Naive thymus-derived CD8-positive, alpha-beta T cell (primary cell): ENCODE measurements at regions of chr14 and their contacts with region 1.

Region 1: DNA sequence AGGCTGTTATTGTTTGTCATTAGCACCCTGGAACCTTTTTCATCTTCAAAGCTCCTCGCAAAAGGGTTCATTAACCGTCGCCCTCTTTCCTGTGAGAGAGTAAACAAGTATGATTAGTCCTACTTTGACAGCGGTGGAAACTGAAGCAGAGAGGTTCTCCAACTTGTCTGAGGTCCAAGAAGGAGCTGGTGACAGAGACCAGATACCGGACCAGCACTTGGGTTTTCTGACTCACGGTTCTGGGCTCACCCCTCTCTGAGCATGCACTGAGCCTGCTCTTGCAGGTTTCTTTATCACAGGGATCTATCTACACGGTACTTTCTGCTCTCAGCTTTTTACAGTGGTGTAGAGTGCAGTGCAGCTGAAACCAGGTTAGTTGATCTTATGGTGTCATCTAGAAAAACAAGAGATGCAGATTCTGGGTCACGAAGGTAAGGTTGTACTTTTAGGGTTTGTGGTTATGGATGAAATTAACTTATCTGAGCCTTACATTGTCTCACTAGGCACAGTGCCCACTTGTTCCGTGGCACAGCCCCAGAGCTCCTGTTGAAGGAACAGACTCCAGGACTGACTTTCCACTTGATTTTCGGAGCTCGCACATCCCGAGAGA is 62.1 kb downstream of the PPP2R5C start:
- DNase-seq: peak; percentile 30 to 86 (median 66)
- ATAC-seq: peak; percentile 66 to 69
- H3K4me3 Mint-ChIP-seq: peak overlapping the region; percentile 84 to 97 (median 92)
- H3K27ac Mint-ChIP-seq: peak overlapping the region; percentile 96 to 100 (median 100)
- H3K4me1 Mint-ChIP-seq: peaks cover 44 to 90% (median 88%) of the 10 kb centered on the region in 4 donors
- H3K27me3 Mint-ChIP-seq: no peaks in the 10 kb centered on the region

Region 2: DNA sequence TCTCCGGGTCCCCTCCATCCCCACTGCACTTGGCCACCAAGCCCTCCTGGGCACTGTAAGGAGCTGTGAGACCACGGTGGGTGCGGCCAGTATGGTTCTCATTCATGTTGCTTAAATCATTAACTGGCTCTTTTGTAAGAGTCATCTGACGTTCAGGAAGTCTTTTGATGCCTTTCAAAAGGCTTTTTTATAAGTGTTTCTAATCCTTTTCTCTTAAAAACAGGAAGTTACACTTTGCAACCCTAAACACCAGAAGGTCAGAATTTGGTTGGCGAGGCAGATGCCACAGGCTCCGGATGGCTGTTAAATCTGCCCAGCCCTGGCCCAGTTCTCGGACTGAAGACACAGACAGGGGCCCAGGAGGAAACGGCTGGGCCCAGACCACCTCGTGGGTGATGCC is 288.4 kb before region 1 on chr14:
- POLR2A ChIA-PET with region 1: no interaction called
- DNase-seq: peak in 3 of 10 donors; percentile 3 to 17 (median 6)
- ATAC-seq: peak in 1 of 2 donors; percentile 65
- H3K4me3 Mint-ChIP-seq: peak overlapping the region in 6 of 10 donors; percentile 22 to 74 (median 52)
- H3K27ac Mint-ChIP-seq: peak overlapping the region in 9 of 10 donors; percentile 27 to 95 (median 66)
- H3K4me1 Mint-ChIP-seq: peaks cover 16 to 33% (median 26%) of the 10 kb centered on the region in 4 donors
- H3K27me3 Mint-ChIP-seq: peaks cover 5 to 26% (median 12%) of the 10 kb centered on the region in 5 donors

Region 3: GRCh38 chr14:101635749-101636560 is 187.7 kb before region 1 on chr14:
- POLR2A ChIA-PET with region 1: no interaction called
- DNase-seq: no peak
- ATAC-seq: no peak
- H3K4me3 Mint-ChIP-seq: no peak overlapping the region
- H3K27ac Mint-ChIP-seq: peak overlapping the region in 1 of 10 donors; percentile 35
- H3K4me1 Mint-ChIP-seq: peaks cover 0 to 9% (median 3%) of the 10 kb centered on the region in 4 donors
- H3K27me3 Mint-ChIP-seq: peaks cover 10 to 53% (median 22%) of the 10 kb centered on the region in 5 donors

Region 4: DNA sequence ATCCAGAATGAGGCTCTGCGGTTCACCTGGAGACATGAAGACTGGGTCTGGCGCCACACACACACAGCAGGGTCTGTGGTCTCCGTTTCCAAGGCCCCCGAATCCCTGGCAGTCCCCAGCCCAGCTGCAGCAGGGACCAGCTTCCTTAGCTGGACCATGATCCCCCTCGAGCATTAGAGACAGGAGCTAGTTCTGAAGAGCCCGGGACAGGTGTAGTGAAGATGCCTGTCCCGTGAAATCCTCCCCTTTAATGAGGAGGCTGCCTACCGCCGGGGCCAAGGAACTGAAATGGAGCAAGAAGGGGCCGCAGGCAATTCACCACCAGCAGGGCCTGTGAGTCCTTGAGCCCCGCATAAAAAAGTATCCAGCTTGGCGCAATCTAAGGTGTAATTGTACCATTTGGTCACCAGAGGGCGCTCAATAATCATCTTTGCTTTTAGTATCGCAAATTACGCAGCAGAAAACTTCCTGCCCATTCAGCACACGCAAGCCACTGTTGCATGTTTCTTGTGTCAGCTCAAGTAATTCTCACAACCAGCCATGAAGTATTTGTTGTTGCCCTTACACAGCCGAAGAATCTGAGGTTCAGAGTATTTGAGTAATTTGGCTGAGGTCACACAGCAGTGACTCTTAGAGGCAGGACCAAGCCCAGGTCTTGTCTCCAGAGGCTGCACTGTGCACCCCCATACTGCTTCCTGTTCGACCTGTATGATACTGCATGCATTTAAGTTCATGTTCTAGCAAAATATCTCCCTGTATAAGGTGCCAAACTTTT is 116.4 kb before region 1 on chr14:
- POLR2A ChIA-PET with region 1: interaction called, 13 read pairs
- DNase-seq: peak in 9 of 10 donors; percentile 51 to 87 (median 74)
- ATAC-seq: peak; percentile 44 to 59
- H3K4me3 Mint-ChIP-seq: peak overlapping the region; percentile 40 to 79 (median 64)
- H3K27ac Mint-ChIP-seq: peak overlapping the region; percentile 76 to 95 (median 89)
- H3K4me1 Mint-ChIP-seq: peaks cover 8 to 44% (median 34%) of the 10 kb centered on the region in 4 donors
- H3K27me3 Mint-ChIP-seq: peaks cover 0 to 4% (median 0%) of the 10 kb centered on the region in 5 donors

Region 5: DNA sequence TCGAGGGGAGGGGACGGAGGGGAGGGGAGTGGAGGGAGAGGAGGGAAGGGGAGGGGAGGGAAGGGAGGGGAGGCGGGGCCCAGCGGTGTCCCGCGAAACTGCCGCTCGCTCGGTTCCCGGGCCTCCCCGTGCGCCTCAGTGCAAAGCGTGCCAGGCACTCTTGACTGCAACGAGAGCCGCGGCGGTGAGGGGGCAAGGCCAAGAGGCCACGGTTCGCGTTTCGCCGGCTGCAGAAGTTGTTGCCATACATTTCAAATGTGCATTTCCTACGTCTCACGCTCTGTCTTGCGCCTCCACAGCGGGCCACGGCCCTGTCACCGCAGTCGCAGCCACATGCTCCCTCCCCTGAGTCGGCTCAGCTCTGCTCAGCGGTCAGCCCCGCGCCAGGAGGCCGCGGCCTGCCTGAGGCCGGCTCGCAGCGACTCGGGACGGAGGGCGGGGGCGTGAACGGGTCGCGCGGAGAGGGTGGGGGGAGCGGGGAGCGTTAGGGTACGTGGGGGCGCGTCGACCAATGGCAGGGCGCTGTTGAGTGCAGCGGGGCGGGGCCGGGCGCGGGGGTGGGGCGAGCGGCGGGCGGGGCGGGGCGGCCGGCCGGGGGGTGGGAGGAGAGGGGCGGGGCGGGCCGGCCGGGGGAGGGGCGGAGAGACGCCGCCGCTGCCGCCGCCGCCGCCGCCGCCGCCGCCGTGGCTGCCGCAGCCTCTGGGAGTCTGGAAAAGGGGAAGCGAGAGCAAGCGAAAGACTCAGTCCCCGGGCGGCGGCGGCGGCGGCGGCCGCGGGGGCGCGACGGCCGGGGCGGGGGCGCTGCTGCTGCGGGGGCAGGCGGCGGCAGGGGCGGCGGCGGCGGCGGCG is 62.4 kb before region 1 on chr14 and contains the start of gene PPP2R5C:
- POLR2A ChIA-PET with region 1: interaction called, 20 read pairs
- DNase-seq: peak; percentile 80 to 94 (median 89)
- ATAC-seq: peak; percentile 71 to 73
- H3K4me3 Mint-ChIP-seq: peak within 1 kb of the TSS; percentile 87 to 98 (median 93)
- H3K27ac Mint-ChIP-seq: peak within 1 kb of the TSS; percentile 43 to 96 (median 92)
- H3K4me1 Mint-ChIP-seq: peaks cover 14 to 36% (median 26%) of the 10 kb centered on the region in 4 donors
- H3K27me3 Mint-ChIP-seq: no peaks in the 10 kb centered on the region
- polyA plus RNA-seq, gene PPP2R5C: 143 to 237 (median 172) TPM

Region 6: DNA sequence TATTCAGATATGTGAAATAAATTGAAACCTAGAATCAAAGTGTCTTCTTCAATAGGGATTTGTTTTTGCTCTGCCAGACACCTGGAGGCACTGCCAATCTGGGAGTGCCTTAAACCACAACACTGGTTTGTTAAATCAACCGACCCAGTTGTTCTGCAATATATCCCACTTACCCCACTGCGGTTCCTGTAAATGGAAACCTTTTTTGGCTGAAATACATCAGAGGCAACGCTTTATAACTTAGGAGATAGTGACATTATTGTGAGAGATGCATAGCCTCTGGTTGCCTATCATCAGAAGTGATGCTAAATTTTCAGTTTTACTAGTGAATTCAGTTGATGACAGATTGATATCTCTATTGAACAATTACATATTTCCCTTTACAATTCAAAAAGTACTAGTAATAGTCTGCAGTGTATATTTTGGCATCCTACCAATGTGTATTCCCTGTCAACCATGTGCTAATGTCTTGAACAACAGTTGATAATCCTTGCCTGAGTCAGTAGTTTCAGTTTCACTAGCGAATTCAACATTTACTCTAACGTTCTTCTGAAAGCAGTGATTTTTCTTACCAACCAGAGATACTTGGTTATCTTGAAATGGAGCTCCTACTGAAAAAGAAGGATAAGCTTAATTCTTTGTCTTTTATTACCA is 31.6 kb before region 1 on chr14:
- POLR2A ChIA-PET with region 1: interaction called, 14 read pairs
- DNase-seq: peak in 3 of 10 donors; percentile 40 to 50 (median 41)
- ATAC-seq: peak; percentile 77 to 83
- H3K4me3 Mint-ChIP-seq: peak overlapping the region; percentile 42 to 89 (median 78)
- H3K27ac Mint-ChIP-seq: peak overlapping the region; percentile 70 to 97 (median 88)
- H3K4me1 Mint-ChIP-seq: peaks cover 15 to 30% (median 24%) of the 10 kb centered on the region in 4 donors
- H3K27me3 Mint-ChIP-seq: no peaks in the 10 kb centered on the region

Region 7: GRCh38 chr14:101834800-101835547 is 11.4 kb after region 1 on chr14:
- POLR2A ChIA-PET with region 1: interaction called, 34 read pairs
- DNase-seq: no peak
- ATAC-seq: no peak
- H3K4me3 Mint-ChIP-seq: peak overlapping the region in 7 of 10 donors; percentile 15 to 34 (median 23)
- H3K27ac Mint-ChIP-seq: peak overlapping the region; percentile 73 to 97 (median 84)
- H3K4me1 Mint-ChIP-seq: peaks cover 37 to 92% (median 90%) of the 10 kb centered on the region in 4 donors
- H3K27me3 Mint-ChIP-seq: no peaks in the 10 kb centered on the region

Region 8: GRCh38 chr14:101927859-101928258 is 104.2 kb after region 1 on chr14:
- POLR2A ChIA-PET with region 1: no interaction called
- DNase-seq: no peak
- ATAC-seq: no peak
- H3K4me3 Mint-ChIP-seq: no peak overlapping the region
- H3K27ac Mint-ChIP-seq: peak overlapping the region in 3 of 10 donors; percentile 6 to 69 (median 36)
- H3K4me1 Mint-ChIP-seq: no peaks in the 10 kb centered on the region
- H3K27me3 Mint-ChIP-seq: no peaks in the 10 kb centered on the region

Region 9: GRCh38 chr14:101947906-101948665 is 124.5 kb after region 1 on chr14:
- POLR2A ChIA-PET with region 1: interaction called, 11 read pairs
- DNase-seq: peak; percentile 96 to 100 (median 100)
- ATAC-seq: peak; percentile 95 to 97
- H3K4me3 Mint-ChIP-seq: peak overlapping the region; percentile 91 to 100 (median 96)
- H3K27ac Mint-ChIP-seq: peak overlapping the region; percentile 97 to 100 (median 100)
- H3K4me1 Mint-ChIP-seq: peaks cover 17 to 37% (median 30%) of the 10 kb centered on the region in 4 donors
- H3K27me3 Mint-ChIP-seq: peaks cover 10 to 37% (median 29%) of the 10 kb centered on the region in 5 donors